PC-9 (cell line): ENCODE measurements at regions of chr3 and their contacts with region 1.

Region 1: GRCh38 chr3:112111785-112112402 is 21.2 kb downstream of the GCSAM start:
- DNase-seq: peak; percentile 60 to 70
- H3K4me3 ChIP-seq: no peak overlapping the region
- H3K27ac ChIP-seq: no peak overlapping the region
- H3K4me1 ChIP-seq: peaks cover 6% of the 10 kb centered on the region; the same call in 1 of the 2 replicates
- H3K27me3 ChIP-seq: no peaks in the 10 kb centered on the region
- CTCF ChIP-seq: peak; percentile 97

Region 2: DNA sequence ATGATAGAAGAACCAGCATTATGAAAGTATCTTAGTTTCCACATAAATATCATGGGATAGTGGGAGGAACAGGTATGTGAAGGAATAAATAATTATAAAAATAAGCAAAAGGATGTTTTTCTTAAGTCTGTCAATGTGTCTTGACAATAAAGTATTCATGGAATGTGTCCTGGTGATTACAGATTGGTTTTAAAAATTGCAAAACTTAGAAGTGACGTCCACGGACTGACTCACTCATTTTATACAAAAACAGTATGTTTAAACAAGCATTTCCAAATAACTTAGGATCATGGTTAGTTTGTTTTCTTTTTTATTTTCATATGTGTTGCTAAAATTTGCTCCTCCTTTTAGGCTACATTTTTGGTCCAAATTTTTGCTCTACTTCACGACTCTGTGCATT is 1727.3 kb before region 1 on chr3:
- CTCF ChIA-PET with region 1: no interaction called
- POLR2A ChIA-PET with region 1: interaction called, 12 read pairs
- intact Hi-C with region 1: no loop called
- DNase-seq: no peak
- H3K4me3 ChIP-seq: no peak overlapping the region
- H3K27ac ChIP-seq: no peak overlapping the region
- H3K4me1 ChIP-seq: no peaks in the 10 kb centered on the region
- H3K27me3 ChIP-seq: no peaks in the 10 kb centered on the region
- CTCF ChIP-seq: no peak

Region 3: GRCh38 chr3:111961461-111962164 is 150.3 kb before region 1 on chr3:
- CTCF ChIA-PET with region 1: no interaction called
- POLR2A ChIA-PET with region 1: no interaction called
- intact Hi-C with region 1: no loop called
- DNase-seq: no peak
- H3K4me3 ChIP-seq: no peak overlapping the region
- H3K27ac ChIP-seq: peak overlapping the region; percentile 77
- H3K4me1 ChIP-seq: peaks cover 21% of the 10 kb centered on the region
- H3K27me3 ChIP-seq: no peaks in the 10 kb centered on the region
- CTCF ChIP-seq: no peak

Region 4: GRCh38 chr3:111989061-111989678 is 122.7 kb before region 1 on chr3:
- CTCF ChIA-PET with region 1: interaction called, 11 read pairs
- POLR2A ChIA-PET with region 1: no interaction called
- intact Hi-C with region 1: loop called (anchors 2 kb)
- DNase-seq: peak in 1 of 2 experiments; percentile 61
- H3K4me3 ChIP-seq: no peak overlapping the region
- H3K27ac ChIP-seq: no peak overlapping the region
- H3K4me1 ChIP-seq: no peaks in the 10 kb centered on the region
- H3K27me3 ChIP-seq: no peaks in the 10 kb centered on the region
- CTCF ChIP-seq: peak; percentile 96

Region 5: DNA sequence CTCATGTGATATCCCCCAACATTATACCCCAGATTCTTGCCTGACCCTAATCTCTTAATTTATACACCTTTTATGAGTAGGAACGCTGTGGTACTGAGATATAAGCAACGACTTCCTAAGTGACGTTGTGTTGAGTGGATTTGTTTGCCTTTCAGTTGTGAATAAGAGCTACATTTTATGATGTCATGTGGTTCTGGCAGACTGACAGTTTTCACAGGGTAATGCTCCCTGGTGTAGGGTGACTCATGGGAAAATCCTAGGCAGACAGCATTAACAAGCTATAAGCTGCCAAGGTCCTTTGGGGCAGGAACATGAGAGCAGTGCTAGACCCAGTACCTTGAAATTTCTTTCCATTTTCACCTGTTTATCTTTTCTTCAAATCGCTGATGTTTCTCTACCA is 14.5 kb before region 1 on chr3:
- CTCF ChIA-PET with region 1: interaction called, 14 read pairs
- POLR2A ChIA-PET with region 1: no interaction called
- intact Hi-C with region 1: no loop called
- DNase-seq: peak; percentile 74 to 99
- H3K4me3 ChIP-seq: no peak overlapping the region
- H3K27ac ChIP-seq: peak overlapping the region; percentile 62
- H3K4me1 ChIP-seq: peaks cover 17% of the 10 kb centered on the region
- H3K27me3 ChIP-seq: no peaks in the 10 kb centered on the region
- CTCF ChIP-seq: no peak

Region 6: DNA sequence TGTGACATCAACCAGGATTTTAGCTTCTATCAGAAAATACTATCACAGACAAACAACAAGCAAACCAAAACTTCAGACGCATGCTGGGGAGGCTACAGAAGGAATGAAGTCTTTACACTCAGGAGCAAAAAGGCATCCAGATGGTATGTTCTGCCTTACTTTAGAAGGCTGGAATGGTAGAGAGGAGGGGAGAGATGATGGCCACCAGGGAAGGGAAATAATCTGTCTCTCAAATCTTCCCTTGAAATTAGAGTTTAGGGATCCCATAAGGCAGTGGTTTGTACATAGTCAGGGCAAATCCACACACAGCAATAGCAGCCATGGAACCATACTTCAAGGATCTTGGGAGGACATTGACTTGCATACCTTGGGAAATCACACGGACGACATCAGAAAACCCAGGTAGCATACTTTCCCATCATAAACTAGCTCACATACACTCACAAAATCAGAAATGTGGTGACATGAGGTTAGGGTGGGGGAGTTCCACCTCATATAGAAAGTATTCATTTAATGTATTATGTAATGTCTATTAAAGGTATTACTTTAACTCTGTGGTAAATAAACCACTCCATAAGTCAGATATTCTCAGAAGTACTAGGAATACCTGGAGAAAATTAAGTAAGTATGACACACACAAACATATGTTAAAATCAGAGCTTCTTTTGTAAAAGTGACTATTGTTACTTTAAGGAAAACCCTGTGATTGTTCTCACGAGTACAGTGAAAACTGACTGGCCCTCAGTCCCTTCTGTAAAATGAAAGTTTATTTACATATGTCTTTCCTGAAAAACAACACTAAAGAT is 378.0 kb after region 1 on chr3:
- CTCF ChIA-PET with region 1: no interaction called
- POLR2A ChIA-PET with region 1: no interaction called
- intact Hi-C with region 1: no loop called
- DNase-seq: no peak
- H3K4me3 ChIP-seq: no peak overlapping the region
- H3K27ac ChIP-seq: no peak overlapping the region
- H3K4me1 ChIP-seq: no peaks in the 10 kb centered on the region
- H3K27me3 ChIP-seq: peaks cover 5% of the 10 kb centered on the region; the same call in 1 of the 2 replicates
- CTCF ChIP-seq: no peak